Caco-2 (cell line): ENCODE measurements at regions of chr6 and their contacts with region 1.

Region 1: GRCh38 chr6:83057705-83058321 is 7.8 kb downstream of the UBE3D start:
- DNase-seq: peak in 1 of 2 experiments; percentile 53
- H3K4me3 ChIP-seq: no peak overlapping the region
- H3K4me3 Mint-ChIP-seq: no peak overlapping the region
- H3K27ac Mint-ChIP-seq: no peak overlapping the region
- H3K4me1 ChIP-seq: no peaks in the 10 kb centered on the region
- H3K4me1 Mint-ChIP-seq: no peaks in the 10 kb centered on the region
- H3K27me3 ChIP-seq: no peaks in the 10 kb centered on the region
- H3K27me3 Mint-ChIP-seq: no peaks in the 10 kb centered on the region
- CTCF ChIP-seq: peak; percentile 68 to 87

Region 2: GRCh38 chr6:82270881-82271645 is 786.8 kb before region 1 on chr6:
- CTCF ChIA-PET with region 1: interaction called, 5 read pairs
- POLR2A ChIA-PET with region 1: no interaction called
- intact Hi-C with region 1: loop called (anchors 1 kb)
- DNase-seq: no peak
- H3K4me3 ChIP-seq: no peak overlapping the region
- H3K4me3 Mint-ChIP-seq: no peak overlapping the region
- H3K27ac Mint-ChIP-seq: no peak overlapping the region
- H3K4me1 ChIP-seq: no peaks in the 10 kb centered on the region
- H3K4me1 Mint-ChIP-seq: peaks cover 6% of the 10 kb centered on the region
- H3K27me3 ChIP-seq: no peaks in the 10 kb centered on the region
- H3K27me3 Mint-ChIP-seq: no peaks in the 10 kb centered on the region
- CTCF ChIP-seq: peak; percentile 58 to 71

Region 3: GRCh38 chr6:82363351-82364086 is 694.3 kb before region 1 on chr6 and contains the start of gene TPBG:
- CTCF ChIA-PET with region 1: no interaction called
- POLR2A ChIA-PET with region 1: no interaction called
- intact Hi-C with region 1: loop called (anchors 5 kb)
- DNase-seq: peak; percentile 66 to 68
- H3K4me3 ChIP-seq: peak within 1 kb of the TSS; percentile 62
- H3K4me3 Mint-ChIP-seq: peak within 1 kb of the TSS; percentile 85
- H3K27ac Mint-ChIP-seq: peak within 1 kb of the TSS; percentile 54
- H3K4me1 ChIP-seq: no peaks in the 10 kb centered on the region; the same call in 1 of the 2 replicates
- H3K4me1 Mint-ChIP-seq: peaks cover 8% of the 10 kb centered on the region
- H3K27me3 ChIP-seq: no peaks in the 10 kb centered on the region; the same call in 1 of the 2 replicates
- H3K27me3 Mint-ChIP-seq: peaks cover 23% of the 10 kb centered on the region
- CTCF ChIP-seq: peak in 1 of 2 experiments; percentile 45
- total RNA-seq, gene TPBG: 4.0 and 4.3 TPM in 2 replicates

Region 4: DNA sequence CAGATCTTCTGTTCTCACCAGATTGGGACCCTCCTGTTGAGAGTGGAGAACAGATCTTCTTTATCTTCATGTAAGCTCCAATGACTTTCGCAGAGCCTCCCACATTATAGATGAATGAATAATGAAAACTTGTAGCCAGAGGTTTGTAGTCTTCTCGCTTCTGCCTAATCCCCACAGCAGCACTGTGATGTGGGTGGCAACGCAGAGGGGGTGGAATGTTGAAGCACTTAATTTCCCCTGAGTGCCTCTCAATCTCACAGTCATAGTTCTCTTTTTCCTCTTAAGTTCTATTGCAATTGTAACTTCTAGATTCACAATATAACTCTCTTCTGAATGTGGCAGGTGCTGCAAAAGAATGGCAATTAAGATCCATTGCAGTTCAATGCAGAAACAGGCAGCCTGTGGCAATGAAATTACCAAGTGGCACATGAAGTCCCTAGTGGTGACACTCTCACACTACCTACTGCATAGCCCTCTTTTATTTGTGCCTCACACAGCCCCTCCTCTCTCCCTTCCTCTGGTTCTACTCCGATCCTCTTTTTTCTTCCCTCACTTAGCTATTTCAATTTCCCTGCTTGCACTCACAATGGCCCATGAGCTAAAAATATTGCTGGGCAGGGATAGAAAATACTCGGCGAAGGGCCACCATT is 274.1 kb before region 1 on chr6:
- CTCF ChIA-PET with region 1: no interaction called
- POLR2A ChIA-PET with region 1: no interaction called
- intact Hi-C with region 1: loop called (anchors 10 kb)
- DNase-seq: peak in 1 of 2 experiments; percentile 9
- H3K4me3 ChIP-seq: no peak overlapping the region
- H3K4me3 Mint-ChIP-seq: no peak overlapping the region
- H3K27ac Mint-ChIP-seq: no peak overlapping the region
- H3K4me1 ChIP-seq: no peaks in the 10 kb centered on the region
- H3K4me1 Mint-ChIP-seq: no peaks in the 10 kb centered on the region
- H3K27me3 ChIP-seq: no peaks in the 10 kb centered on the region
- H3K27me3 Mint-ChIP-seq: peaks cover 5% of the 10 kb centered on the region
- CTCF ChIP-seq: peak; percentile 23 to 39

Region 5: DNA sequence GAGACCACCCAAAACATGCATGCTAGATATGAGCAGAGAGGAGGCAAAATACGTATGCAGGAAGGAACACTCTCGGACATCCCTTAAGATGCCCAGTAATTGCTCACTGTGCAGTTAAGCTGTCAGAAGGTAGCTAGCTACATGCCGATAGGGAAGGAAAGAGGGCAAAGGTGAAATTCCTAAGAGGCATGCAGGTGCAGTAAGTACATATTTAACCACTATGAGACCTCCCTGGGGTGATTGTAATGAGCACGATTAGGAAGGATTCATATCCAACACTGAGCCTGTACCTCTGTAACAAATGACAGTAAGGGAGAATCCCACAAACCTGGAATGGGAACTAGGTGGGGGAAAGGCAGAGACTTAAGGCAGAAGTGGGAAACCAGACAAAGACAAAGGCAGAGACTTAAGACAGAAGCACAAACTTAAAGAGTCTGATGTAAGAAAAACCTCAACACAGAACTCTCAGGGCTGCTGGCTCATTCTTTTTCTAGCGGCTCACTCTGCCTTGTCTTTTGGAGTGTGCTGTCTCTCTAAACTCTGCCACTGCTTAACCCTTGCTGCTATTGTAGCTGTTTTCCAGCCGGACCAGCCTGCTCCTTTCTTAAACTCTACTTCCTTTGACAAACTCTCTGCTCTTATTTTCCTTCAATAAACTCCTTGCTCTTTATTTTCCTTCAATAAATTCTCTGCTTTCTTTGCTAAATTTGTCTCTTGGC is 140.3 kb before region 1 on chr6:
- CTCF ChIA-PET with region 1: no interaction called
- POLR2A ChIA-PET with region 1: no interaction called
- intact Hi-C with region 1: loop called (anchors 5 kb)
- DNase-seq: peak; percentile 57 to 66
- H3K4me3 ChIP-seq: no peak overlapping the region
- H3K4me3 Mint-ChIP-seq: peak overlapping the region; percentile 59
- H3K27ac Mint-ChIP-seq: peak overlapping the region; percentile 79
- H3K4me1 ChIP-seq: peaks cover 18% of the 10 kb centered on the region
- H3K4me1 Mint-ChIP-seq: peaks cover 27% of the 10 kb centered on the region
- H3K27me3 ChIP-seq: no peaks in the 10 kb centered on the region
- H3K27me3 Mint-ChIP-seq: no peaks in the 10 kb centered on the region
- CTCF ChIP-seq: no peak

Region 6: GRCh38 chr6:83108378-83108777 is 50.6 kb after region 1 on chr6:
- CTCF ChIA-PET with region 1: no interaction called
- POLR2A ChIA-PET with region 1: no interaction called
- intact Hi-C with region 1: no loop called
- DNase-seq: no peak
- H3K4me3 ChIP-seq: no peak overlapping the region
- H3K4me3 Mint-ChIP-seq: no peak overlapping the region
- H3K27ac Mint-ChIP-seq: no peak overlapping the region
- H3K4me1 ChIP-seq: peaks cover 4% of the 10 kb centered on the region; the same call in 1 of the 2 replicates
- H3K4me1 Mint-ChIP-seq: no peaks in the 10 kb centered on the region
- H3K27me3 ChIP-seq: no peaks in the 10 kb centered on the region
- H3K27me3 Mint-ChIP-seq: no peaks in the 10 kb centered on the region
- CTCF ChIP-seq: no peak